ENCODE measurements at regions of chr4 and their contacts with region 1.

Region 1: GRCh38 chr4:146235654-146236177 is 21.4 kb downstream of the REELD1 start:
- DNase-seq: peak in 2 of 5 donors; percentile 43 to 57
- ATAC-seq: peak; percentile 50 to 82 (median 69)
- H3K4me3 ChIP-seq: no peak overlapping the region
- H3K27ac ChIP-seq: peak overlapping the region in 7 of 12 donors; percentile 5 to 76 (median 42)
- H3K4me1 ChIP-seq: peaks cover 0 to 22% (median 12%) of the 10 kb centered on the region in 12 donors
- H3K27me3 ChIP-seq: no peaks in the 10 kb centered on the region
- CTCF ChIP-seq: no peak
- POLR2A ChIP-seq: no peak

Region 2: DNA sequence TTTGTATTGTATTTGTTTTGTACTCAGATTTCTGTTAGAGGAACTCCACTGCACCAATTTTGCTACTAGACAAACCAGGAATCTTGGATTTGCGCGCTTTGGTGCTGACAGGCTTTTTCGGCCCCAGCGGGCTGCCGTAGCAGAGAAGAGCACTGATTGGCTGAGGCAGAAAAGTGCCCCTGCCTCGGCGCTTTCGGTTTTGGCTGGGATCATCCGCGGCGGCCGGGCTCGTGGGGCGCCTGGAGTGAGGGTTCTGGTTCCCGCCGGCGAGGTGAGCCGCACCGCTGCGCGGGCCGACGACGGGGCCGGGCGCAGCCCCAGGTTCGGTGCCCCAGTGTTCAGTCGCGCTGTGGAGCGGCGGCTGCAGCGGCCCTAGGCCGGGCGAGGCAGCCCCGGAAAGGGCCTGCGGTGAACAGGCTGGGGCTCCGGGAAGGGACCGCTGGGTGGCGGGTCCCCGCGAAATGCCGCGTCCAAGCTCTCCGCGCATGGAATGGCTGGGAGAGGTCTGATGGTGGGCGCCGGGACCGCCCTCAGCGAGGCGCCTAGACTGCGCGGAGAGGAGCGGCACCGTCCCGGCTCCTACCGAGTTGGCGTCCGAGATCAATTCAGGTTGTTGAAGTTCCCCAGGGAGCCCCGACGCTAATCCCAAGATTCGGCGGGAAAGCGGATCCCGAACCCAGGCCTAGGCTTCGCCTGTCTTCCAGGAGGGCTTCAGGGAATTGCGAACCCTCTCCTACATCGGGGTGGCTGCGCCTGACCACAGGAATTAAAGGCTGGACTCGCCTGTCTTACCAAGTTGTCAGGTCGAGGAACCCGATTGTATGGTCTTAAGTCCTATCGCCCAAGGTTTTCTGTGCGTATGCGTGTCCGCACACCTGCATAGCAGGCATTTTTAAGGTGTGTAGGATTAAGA is 59.9 kb before region 1 on chr4 and contains the start of gene LSM6:
- intact Hi-C with region 1: loop called in 2 of 10 experiments (anchors 5 kb)
- DNase-seq: peak; percentile 91 to 93 (median 92)
- ATAC-seq: peak; percentile 95 to 99 (median 98)
- H3K4me3 ChIP-seq: peak within 1 kb of the TSS; percentile 64 to 95 (median 88)
- H3K27ac ChIP-seq: peak within 1 kb of the TSS; percentile 77 to 95 (median 93)
- H3K4me1 ChIP-seq: peaks cover 0 to 47% (median 39%) of the 10 kb centered on the region in 12 donors
- H3K27me3 ChIP-seq: no peaks in the 10 kb centered on the region
- CTCF ChIP-seq: peak in 6 of 12 donors; percentile 13 to 37 (median 28)
- POLR2A ChIP-seq: peak in 1 of 2 donors; percentile 74
- total RNA-seq, gene LSM6: 9.9 to 18.5 (median 12.1) TPM

Region 3: GRCh38 chr4:146191766-146192458 is 43.8 kb before region 1 on chr4:
- intact Hi-C with region 1: loop called in 2 of 10 experiments (anchors 5 kb)
- DNase-seq: peak in 3 of 5 donors; percentile 16 to 52 (median 31)
- ATAC-seq: peak; percentile 81 to 91 (median 88)
- H3K4me3 ChIP-seq: no peak overlapping the region
- H3K27ac ChIP-seq: peak overlapping the region in 9 of 12 donors; percentile 20 to 75 (median 63)
- H3K4me1 ChIP-seq: peaks cover 0 to 24% (median 12%) of the 10 kb centered on the region in 12 donors
- H3K27me3 ChIP-seq: no peaks in the 10 kb centered on the region
- CTCF ChIP-seq: peak in 9 of 12 donors; percentile 10 to 47 (median 29)
- POLR2A ChIP-seq: no peak

Region 4: GRCh38 chr4:146545102-146545501 is 309.4 kb after region 1 on chr4:
- intact Hi-C with region 1: no loop called
- DNase-seq: no peak
- ATAC-seq: no peak
- H3K4me3 ChIP-seq: no peak overlapping the region
- H3K27ac ChIP-seq: no peak overlapping the region
- H3K4me1 ChIP-seq: no peaks in the 10 kb centered on the region
- H3K27me3 ChIP-seq: no peaks in the 10 kb centered on the region
- CTCF ChIP-seq: no peak
- POLR2A ChIP-seq: no peak